ENCODE measurements at regions of chr2 and their contacts with region 1.

Region 1: DNA sequence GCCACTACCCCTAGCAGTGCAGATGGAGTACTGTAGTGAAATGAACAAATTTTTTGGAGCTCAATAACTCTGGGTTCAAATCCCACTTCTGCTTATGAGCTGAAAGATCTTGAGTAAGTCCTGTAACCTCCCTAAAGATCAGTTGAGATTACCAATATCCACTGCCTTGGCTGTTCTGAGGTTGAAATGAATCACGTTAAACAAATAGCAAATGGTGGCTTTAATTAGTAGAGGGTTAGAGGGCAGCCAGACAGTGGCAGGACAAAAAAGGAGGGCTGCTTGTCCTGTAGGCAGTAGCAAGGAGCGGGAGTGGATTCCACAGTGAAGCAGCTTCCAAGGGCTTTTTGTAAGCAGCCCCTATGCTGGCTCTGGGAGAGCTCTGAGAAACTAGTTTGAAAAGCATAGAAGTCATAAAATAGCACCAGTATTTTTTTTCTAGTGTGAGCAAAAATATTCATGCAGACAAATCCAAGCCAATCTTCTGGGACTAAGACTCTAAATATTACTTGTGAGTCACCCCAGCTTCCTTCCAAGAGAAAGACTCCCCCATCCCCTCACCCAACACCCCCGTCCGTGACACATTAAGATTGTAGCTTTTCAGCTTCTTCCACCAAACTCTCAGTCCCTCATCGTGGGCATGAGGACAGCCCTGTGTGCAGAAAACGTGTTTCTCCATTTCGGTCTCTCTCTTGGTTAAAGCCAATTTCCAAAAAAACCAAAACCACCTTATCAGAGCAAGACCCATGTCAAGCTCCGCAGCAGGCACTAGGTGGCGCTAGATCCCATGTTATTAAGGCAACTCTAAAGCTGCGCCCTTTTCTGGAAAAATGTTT is 123.5 kb upstream of the LGALSL start:
- DNase-seq: peak; percentile 61 to 80 (median 73)
- ATAC-seq: peak; percentile 54
- H3K4me3 ChIP-seq: no peak overlapping the region
- H3K4me3 Mint-ChIP-seq: peak overlapping the region in 9 of 10 donors; percentile 53 to 86 (median 68)
- H3K27ac ChIP-seq: no peak overlapping the region
- H3K27ac Mint-ChIP-seq: peak overlapping the region in 8 of 9 donors; percentile 9 to 94 (median 84)
- H3K4me1 ChIP-seq: peaks cover 27 to 29% of the 10 kb centered on the region in 2 donors
- H3K4me1 Mint-ChIP-seq: peaks cover 17 to 52% (median 36%) of the 10 kb centered on the region in 7 donors
- H3K27me3 ChIP-seq: no peaks in the 10 kb centered on the region
- H3K27me3 Mint-ChIP-seq: peaks cover 0 to 3% (median 0%) of the 10 kb centered on the region in 5 donors

Region 2: DNA sequence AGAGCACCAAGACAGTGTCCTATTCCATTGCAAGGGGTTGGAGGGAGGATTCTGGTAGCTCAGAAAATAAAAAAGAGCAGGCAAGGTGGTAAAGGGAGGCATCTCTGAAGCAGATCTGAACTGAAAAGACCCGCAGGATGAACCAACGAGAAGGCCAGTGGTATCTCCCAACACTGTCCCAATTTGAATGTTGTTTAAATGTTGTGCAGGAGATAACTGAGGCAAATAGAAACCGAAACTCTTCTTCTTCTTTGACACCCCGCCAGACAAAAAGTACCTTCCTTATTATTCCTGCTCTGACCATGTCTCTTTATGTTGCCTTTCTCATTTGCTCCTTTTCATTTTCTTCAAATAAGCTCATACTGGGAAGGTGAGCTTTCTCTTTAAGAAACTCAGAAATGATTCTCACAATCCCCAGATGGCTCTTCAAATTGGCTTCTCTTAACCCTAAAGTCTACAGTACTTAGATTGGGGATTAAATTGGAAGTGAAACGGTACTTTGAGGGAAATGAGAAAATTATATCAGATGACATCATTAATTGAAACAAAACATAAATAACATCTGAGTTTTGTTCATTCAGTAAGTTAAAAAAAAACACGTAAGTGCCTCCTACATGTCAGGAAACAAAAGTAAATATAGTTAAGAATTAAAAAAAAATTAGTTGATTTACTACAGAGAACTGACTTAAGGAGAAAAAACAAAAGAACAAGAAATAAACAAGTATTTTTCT is 885.8 kb before region 1 on chr2:
- CTCF ChIA-PET with region 1: no interaction called
- POLR2A ChIA-PET with region 1: no interaction called
- intact Hi-C with region 1: no loop called
- DNase-seq: no peak
- ATAC-seq: no peak
- H3K4me3 ChIP-seq: no peak overlapping the region
- H3K4me3 Mint-ChIP-seq: no peak overlapping the region
- H3K27ac ChIP-seq: no peak overlapping the region
- H3K27ac Mint-ChIP-seq: no peak overlapping the region
- H3K4me1 ChIP-seq: no peaks in the 10 kb centered on the region
- H3K4me1 Mint-ChIP-seq: peaks cover 0 to 6% (median 0%) of the 10 kb centered on the region in 7 donors
- H3K27me3 ChIP-seq: no peaks in the 10 kb centered on the region
- H3K27me3 Mint-ChIP-seq: no peaks in the 10 kb centered on the region

Region 3: DNA sequence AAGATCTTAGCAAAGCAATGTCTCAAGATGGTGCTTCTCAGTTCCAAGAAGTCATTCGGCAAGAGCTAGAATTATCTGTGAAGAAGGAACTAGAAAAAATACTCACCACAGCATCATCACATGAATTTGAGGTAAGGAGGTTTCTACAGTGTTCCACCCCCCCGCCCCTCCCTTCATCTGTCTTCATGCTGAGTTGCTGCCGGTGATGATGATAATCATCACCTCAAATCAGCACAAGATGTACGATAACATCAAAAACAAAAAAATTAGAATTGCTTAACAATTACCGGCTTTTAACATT is 474.2 kb before region 1 on chr2:
- CTCF ChIA-PET with region 1: interaction called, 6 read pairs
- POLR2A ChIA-PET with region 1: no interaction called
- intact Hi-C with region 1: loop called in 1 of 2 experiments (anchors 5 kb)
- DNase-seq: peak in 7 of 9 donors; percentile 54 to 87 (median 78)
- ATAC-seq: peak; percentile 93
- H3K4me3 ChIP-seq: peak overlapping the region; percentile 28
- H3K4me3 Mint-ChIP-seq: peak overlapping the region; percentile 42 to 78 (median 73)
- H3K27ac ChIP-seq: peak overlapping the region; percentile 81
- H3K27ac Mint-ChIP-seq: peak overlapping the region; percentile 85 to 97 (median 93)
- H3K4me1 ChIP-seq: peaks cover 27 to 36% of the 10 kb centered on the region in 2 donors
- H3K4me1 Mint-ChIP-seq: peaks cover 40 to 73% (median 71%) of the 10 kb centered on the region in 7 donors
- H3K27me3 ChIP-seq: no peaks in the 10 kb centered on the region
- H3K27me3 Mint-ChIP-seq: no peaks in the 10 kb centered on the region

Region 4: GRCh38 chr2:64157792-64158191 is 172.7 kb before region 1 on chr2:
- CTCF ChIA-PET with region 1: no interaction called
- POLR2A ChIA-PET with region 1: no interaction called
- intact Hi-C with region 1: no loop called
- DNase-seq: no peak
- ATAC-seq: no peak
- H3K4me3 ChIP-seq: no peak overlapping the region
- H3K4me3 Mint-ChIP-seq: no peak overlapping the region
- H3K27ac ChIP-seq: no peak overlapping the region
- H3K27ac Mint-ChIP-seq: no peak overlapping the region
- H3K4me1 ChIP-seq: no peaks in the 10 kb centered on the region
- H3K4me1 Mint-ChIP-seq: no peaks in the 10 kb centered on the region
- H3K27me3 ChIP-seq: no peaks in the 10 kb centered on the region
- H3K27me3 Mint-ChIP-seq: peaks cover 0 to 18% (median 0%) of the 10 kb centered on the region in 5 donors

Region 5: DNA sequence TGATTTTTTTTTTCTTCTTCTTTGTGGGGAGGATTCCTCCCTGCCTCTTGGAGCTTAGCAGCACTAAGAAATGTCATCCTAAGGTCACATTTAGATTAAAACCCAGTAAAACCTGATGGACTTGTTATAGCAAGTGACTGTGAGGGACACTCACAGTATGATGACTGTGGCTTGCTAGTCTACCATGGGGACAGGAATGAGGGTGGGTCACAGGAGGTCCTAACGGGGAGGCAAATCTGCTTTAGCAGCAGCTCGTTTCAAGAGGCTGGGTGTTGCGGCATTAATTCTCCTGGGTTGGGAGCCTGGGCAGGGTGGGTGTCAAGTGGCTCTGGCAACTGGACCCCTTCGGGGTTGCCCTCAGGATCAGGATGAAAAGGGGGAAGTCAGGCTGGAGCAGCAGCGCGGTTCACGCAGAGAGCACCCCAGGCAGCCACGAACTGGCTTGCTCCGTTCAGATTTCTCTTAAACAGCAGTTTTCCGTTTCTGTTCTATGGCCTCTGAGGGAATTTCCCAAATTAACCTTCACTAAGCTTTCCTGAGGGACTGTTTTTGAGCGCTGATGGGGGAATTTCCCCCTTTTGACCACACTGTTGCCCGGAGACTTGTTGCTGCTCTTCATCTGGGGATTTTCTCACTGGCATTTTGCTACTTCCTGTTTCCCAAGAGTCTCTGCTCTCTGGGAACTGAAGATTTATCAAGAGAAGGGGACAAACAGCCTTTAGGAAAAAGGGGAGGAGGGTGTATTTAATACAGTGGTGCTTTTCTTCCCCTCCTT is 126.5 kb before region 1 on chr2:
- CTCF ChIA-PET with region 1: interaction called, 4 read pairs
- POLR2A ChIA-PET with region 1: interaction called, 8 read pairs
- intact Hi-C with region 1: loop called in 1 of 2 experiments (anchors 1 kb)
- DNase-seq: peak in 5 of 9 donors; percentile 12 to 67 (median 28)
- ATAC-seq: peak; percentile 81
- H3K4me3 ChIP-seq: peak overlapping the region; percentile 52
- H3K4me3 Mint-ChIP-seq: peak overlapping the region; percentile 72 to 89 (median 80)
- H3K27ac ChIP-seq: peak overlapping the region; percentile 66
- H3K27ac Mint-ChIP-seq: peak overlapping the region; percentile 82 to 95 (median 94)
- H3K4me1 ChIP-seq: peaks cover 0 to 51% of the 10 kb centered on the region in 2 donors
- H3K4me1 Mint-ChIP-seq: peaks cover 26 to 91% (median 81%) of the 10 kb centered on the region in 7 donors
- H3K27me3 ChIP-seq: no peaks in the 10 kb centered on the region
- H3K27me3 Mint-ChIP-seq: no peaks in the 10 kb centered on the region

Region 6: GRCh38 chr2:64307421-64307820 is 23.1 kb before region 1 on chr2:
- CTCF ChIA-PET with region 1: interaction called, 7 read pairs
- POLR2A ChIA-PET with region 1: interaction called, 11 read pairs
- intact Hi-C with region 1: no loop called
- DNase-seq: no peak
- ATAC-seq: no peak
- H3K4me3 ChIP-seq: no peak overlapping the region
- H3K4me3 Mint-ChIP-seq: no peak overlapping the region
- H3K27ac ChIP-seq: no peak overlapping the region
- H3K27ac Mint-ChIP-seq: no peak overlapping the region
- H3K4me1 ChIP-seq: no peaks in the 10 kb centered on the region
- H3K4me1 Mint-ChIP-seq: peaks cover 0 to 2% (median 0%) of the 10 kb centered on the region in 7 donors
- H3K27me3 ChIP-seq: no peaks in the 10 kb centered on the region
- H3K27me3 Mint-ChIP-seq: peaks cover 0 to 20% (median 0%) of the 10 kb centered on the region in 5 donors

Region 7: GRCh38 chr2:64538764-64539433 is 208.4 kb after region 1 on chr2:
- CTCF ChIA-PET with region 1: no interaction called
- POLR2A ChIA-PET with region 1: no interaction called
- intact Hi-C with region 1: no loop called
- DNase-seq: no peak
- ATAC-seq: no peak
- H3K4me3 ChIP-seq: no peak overlapping the region
- H3K4me3 Mint-ChIP-seq: no peak overlapping the region
- H3K27ac ChIP-seq: no peak overlapping the region
- H3K27ac Mint-ChIP-seq: no peak overlapping the region
- H3K4me1 ChIP-seq: peaks cover 4 to 12% of the 10 kb centered on the region in 2 donors
- H3K4me1 Mint-ChIP-seq: peaks cover 36 to 88% (median 68%) of the 10 kb centered on the region in 7 donors
- H3K27me3 ChIP-seq: no peaks in the 10 kb centered on the region
- H3K27me3 Mint-ChIP-seq: no peaks in the 10 kb centered on the region

Region 8: GRCh38 chr2:64644177-64645004 is 313.9 kb after region 1 on chr2:
- CTCF ChIA-PET with region 1: no interaction called
- POLR2A ChIA-PET with region 1: interaction called, 5 read pairs
- intact Hi-C with region 1: loop called in 1 of 2 experiments (anchors 2 kb)
- DNase-seq: peak in 8 of 9 donors; percentile 48 to 57 (median 53)
- ATAC-seq: peak; percentile 79
- H3K4me3 ChIP-seq: peak overlapping the region; percentile 62
- H3K4me3 Mint-ChIP-seq: peak overlapping the region; percentile 80 to 93 (median 90)
- H3K27ac ChIP-seq: peak overlapping the region; percentile 52
- H3K27ac Mint-ChIP-seq: peak overlapping the region; percentile 34 to 94 (median 88)
- H3K4me1 ChIP-seq: peaks cover 4 to 72% of the 10 kb centered on the region in 2 donors
- H3K4me1 Mint-ChIP-seq: peaks cover 45 to 100% (median 89%) of the 10 kb centered on the region in 7 donors
- H3K27me3 ChIP-seq: no peaks in the 10 kb centered on the region
- H3K27me3 Mint-ChIP-seq: no peaks in the 10 kb centered on the region

Region 9: DNA sequence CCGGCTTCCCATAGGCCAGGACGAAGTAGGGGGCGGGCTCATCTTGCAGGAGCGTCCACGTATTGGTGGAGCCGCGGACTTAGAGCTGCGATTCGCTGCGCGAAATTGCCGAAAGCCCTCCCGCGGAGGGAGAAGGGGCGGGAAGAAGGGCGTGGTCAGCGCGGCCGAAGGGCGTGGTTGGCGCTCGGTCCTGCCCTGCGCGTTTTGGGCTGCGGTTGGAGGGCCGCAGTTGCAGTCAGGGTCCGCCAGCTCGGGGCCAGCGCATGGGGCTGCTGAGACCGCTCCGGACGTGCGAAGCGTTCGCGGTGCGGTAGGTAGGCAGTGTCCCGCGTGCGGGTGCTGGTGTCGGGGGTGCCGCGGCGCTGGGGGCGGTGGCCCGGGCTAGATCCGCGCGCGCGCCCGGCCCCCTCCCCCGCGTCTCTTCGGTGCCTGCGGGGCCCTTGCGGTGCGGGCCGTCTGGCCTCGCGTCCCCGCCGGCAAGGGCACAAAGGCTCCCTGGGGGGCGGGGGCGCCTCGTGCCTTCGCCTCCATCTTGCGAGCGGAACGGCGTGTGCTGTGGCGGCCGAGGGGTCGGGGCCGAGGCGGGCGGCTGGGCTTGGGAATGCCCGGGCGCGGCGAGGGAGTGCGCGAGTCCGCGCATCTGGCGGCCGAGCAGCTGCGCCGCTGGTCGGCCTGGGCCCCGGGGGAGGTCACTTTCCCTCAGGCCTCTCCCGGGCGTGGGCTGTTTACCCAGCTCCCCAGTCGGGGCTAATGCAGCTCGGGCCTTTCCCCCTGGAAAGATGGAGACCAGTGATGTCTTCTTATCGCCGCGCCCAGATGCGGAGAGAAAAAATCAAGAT is 725.9 kb after region 1 on chr2 and contains the start of gene CEP68:
- CTCF ChIA-PET with region 1: no interaction called
- POLR2A ChIA-PET with region 1: no interaction called
- intact Hi-C with region 1: loop called in 1 of 2 experiments (anchors 10 kb)
- DNase-seq: peak; percentile 88 to 96 (median 95)
- ATAC-seq: peak; percentile 96
- H3K4me3 ChIP-seq: peak within 1 kb of the TSS; percentile 54
- H3K4me3 Mint-ChIP-seq: peak within 1 kb of the TSS; percentile 79 to 99 (median 94)
- H3K27ac ChIP-seq: peak within 1 kb of the TSS; percentile 76
- H3K27ac Mint-ChIP-seq: peak within 1 kb of the TSS; percentile 84 to 97 (median 90)
- H3K4me1 ChIP-seq: peaks cover 10 to 42% of the 10 kb centered on the region in 2 donors
- H3K4me1 Mint-ChIP-seq: peaks cover 41 to 81% (median 61%) of the 10 kb centered on the region in 7 donors
- H3K27me3 ChIP-seq: no peaks in the 10 kb centered on the region
- H3K27me3 Mint-ChIP-seq: peaks cover 0 to 2% (median 0%) of the 10 kb centered on the region in 5 donors
- total RNA-seq, gene CEP68: 8.5 to 52.0 (median 20.8) TPM